AG04449 (cell line): ENCODE measurements at regions of chr11 and their contacts with region 1.

Region 1: GRCh38 chr11:10366568-10367370 is 61.9 kb downstream of the ADM start:
- DNase-seq: peak; percentile 76
- H3K4me3 ChIP-seq: no peak overlapping the region
- CTCF ChIP-seq: peak; percentile 86

Region 2: GRCh38 chr11:10322830-10323792 is 43.7 kb before region 1 on chr11:
- CTCF ChIA-PET with region 1: interaction called, 29 read pairs
- POLR2A ChIA-PET with region 1: no interaction called
- DNase-seq: peak; percentile 67
- H3K4me3 ChIP-seq: no peak overlapping the region
- CTCF ChIP-seq: no peak

Region 3: GRCh38 chr11:10328314-10329090 is 38.3 kb before region 1 on chr11:
- CTCF ChIA-PET with region 1: interaction called, 29 read pairs
- POLR2A ChIA-PET with region 1: no interaction called
- DNase-seq: no peak
- H3K4me3 ChIP-seq: no peak overlapping the region
- CTCF ChIP-seq: no peak

Region 4: DNA sequence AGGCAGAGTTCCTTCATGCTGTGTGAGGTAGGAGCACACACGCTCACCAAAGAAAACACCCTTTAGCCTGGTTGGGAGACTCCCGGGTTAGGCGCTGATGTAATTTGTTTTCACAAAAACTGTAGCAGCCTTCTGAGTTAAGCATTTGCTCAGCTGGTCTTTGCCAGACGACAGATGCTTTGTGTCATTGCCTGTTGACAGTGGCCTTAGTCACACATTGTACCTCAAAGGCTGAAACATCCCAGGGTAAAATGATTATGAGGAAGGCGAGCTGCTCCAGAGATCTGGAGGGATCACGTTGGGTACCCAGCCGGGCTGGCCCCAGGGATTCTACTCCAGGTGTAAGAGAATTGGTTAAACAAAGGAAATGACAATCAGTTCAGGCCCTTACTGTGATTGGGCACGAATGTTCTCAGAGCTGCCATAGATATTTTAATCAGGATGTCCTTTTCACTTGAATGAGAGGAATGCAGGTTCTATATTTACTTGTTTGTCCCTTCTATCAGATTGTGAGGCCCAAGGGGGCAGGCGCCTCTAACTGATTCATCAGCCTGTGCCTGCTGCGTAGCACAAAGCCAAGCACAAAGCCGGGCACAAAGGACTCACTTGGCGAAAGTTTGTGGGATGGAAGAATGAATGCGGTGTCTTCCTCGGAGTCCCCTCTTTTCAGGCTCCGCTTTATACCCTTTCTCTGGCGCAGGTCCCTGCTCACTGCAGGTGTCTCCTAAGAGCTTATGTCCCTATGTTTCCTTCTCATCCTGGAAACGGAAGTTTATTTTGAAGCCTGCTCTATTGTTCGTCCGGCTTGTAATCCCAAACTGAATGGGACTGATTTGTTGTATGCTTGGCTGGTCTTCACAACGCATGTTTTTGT is 14.8 kb before region 1 on chr11:
- CTCF ChIA-PET with region 1: interaction called, 126 read pairs
- POLR2A ChIA-PET with region 1: interaction called, 3 read pairs
- DNase-seq: peak; percentile 74
- H3K4me3 ChIP-seq: no peak overlapping the region
- CTCF ChIP-seq: no peak

Region 5: DNA sequence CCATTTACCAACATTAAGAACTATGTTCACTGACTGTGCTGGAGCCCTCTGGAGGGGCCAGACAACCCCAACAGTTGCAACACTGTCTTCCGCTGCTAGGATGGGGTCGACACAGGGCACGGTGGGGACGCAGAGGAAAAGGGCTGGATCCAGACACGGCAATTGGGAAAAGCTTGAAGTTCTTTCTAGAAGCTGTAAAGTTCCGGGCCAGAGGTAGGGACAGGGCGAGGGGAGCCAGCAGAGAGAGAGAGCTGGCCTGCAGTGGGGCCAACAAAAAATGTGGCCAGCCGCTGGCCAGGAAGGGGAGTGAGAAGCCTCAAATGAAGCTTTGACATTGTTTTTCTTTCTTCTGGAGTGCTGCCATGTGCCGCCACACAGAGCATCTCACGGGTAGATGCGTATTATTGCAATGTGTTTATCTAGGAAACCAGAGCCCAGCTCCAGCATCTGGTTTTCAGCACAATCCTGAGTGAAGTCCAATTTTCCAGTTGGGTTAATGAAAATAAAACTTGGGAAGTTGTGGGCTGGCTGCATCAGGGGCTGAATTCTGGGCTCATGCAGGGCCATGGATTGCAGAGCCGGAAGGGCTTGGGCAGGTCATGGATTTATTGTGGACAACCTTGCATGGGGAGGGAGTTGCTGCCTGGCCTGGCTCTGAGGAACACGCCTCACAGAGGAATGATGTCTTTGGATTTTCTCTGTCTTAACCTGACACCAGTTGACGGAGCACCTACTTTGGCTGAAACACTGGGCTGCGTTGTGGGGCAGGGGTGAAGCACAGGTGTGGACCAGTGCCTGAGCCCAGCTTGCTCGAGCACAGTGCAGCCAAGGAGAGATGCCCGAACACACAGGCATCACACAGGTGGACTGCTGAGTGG is 20.7 kb after region 1 on chr11:
- CTCF ChIA-PET with region 1: interaction called, 76 read pairs
- POLR2A ChIA-PET with region 1: no interaction called
- DNase-seq: peak; percentile 71
- H3K4me3 ChIP-seq: no peak overlapping the region
- CTCF ChIP-seq: no peak